MCF 10A (cell line): ENCODE measurements at regions of chr1 and their contacts with region 1.

Region 1: GRCh38 chr1:202998836-202999750 is 8.1 kb upstream of the TMEM183A start:
- DNase-seq: peak; percentile 85
- H3K4me3 Mint-ChIP-seq: no peak overlapping the region
- H3K27ac Mint-ChIP-seq: no peak overlapping the region
- H3K4me1 Mint-ChIP-seq: peaks cover 15% of the 10 kb centered on the region
- H3K27me3 Mint-ChIP-seq: peaks cover 45% of the 10 kb centered on the region
- CTCF ChIP-seq: peak; percentile 96

Region 2: GRCh38 chr1:202716654-202717053 is 282.4 kb before region 1 on chr1:
- CTCF ChIA-PET with region 1: interaction called, 22 read pairs
- POLR2A ChIA-PET with region 1: no interaction called
- intact Hi-C with region 1: loop called (anchors 1 kb)
- DNase-seq: no peak
- H3K4me3 Mint-ChIP-seq: no peak overlapping the region
- H3K27ac Mint-ChIP-seq: no peak overlapping the region
- H3K4me1 Mint-ChIP-seq: no peaks in the 10 kb centered on the region
- H3K27me3 Mint-ChIP-seq: peaks cover 40% of the 10 kb centered on the region
- CTCF ChIP-seq: no peak

Region 3: DNA sequence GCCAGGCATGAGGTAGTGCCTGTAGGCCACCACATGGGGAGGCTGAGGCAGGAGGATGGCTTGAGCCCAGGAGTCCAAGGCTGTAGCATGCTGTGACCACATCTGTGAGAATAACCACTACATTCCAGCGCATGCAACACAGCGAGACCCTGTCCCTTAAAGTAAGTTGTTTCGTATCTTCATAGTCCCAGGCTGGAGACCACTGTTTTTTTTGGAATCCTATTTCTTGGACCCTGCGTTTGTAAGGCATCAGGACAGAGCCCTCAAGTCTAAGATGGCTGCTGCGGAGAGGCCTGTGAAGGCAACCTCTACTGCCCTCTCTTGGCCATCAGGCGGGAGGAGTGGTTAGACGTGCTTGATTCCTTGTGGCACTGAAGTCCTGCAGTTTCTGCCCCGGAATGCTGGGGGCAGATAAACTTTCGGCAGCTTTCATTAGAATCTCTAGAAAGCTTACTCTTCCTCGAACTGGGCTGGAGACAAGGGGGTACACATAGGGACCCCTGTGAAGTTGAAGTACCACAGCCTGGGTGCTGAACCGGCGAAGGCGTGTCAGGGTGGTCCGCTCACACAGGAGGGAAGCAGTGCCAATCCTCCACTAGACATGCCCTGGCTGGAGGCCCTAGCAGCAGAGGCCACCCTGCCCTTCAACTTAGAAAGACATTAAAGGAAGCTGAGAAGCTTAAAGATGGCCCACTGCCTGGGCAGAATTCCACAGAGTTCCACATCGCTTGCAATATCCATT is 146.8 kb before region 1 on chr1:
- CTCF ChIA-PET with region 1: interaction called, 3 read pairs
- POLR2A ChIA-PET with region 1: no interaction called
- intact Hi-C with region 1: loop called (anchors 1 kb)
- DNase-seq: peak; percentile 88
- H3K4me3 Mint-ChIP-seq: no peak overlapping the region
- H3K27ac Mint-ChIP-seq: no peak overlapping the region
- H3K4me1 Mint-ChIP-seq: no peaks in the 10 kb centered on the region
- H3K27me3 Mint-ChIP-seq: no peaks in the 10 kb centered on the region
- CTCF ChIP-seq: peak; percentile 87

Region 4: GRCh38 chr1:202926720-202927491 is 72.2 kb before region 1 on chr1 and contains the start of gene KLHL12:
- CTCF ChIA-PET with region 1: interaction called, 30 read pairs
- POLR2A ChIA-PET with region 1: interaction called, 6 read pairs
- intact Hi-C with region 1: loop called (anchors 1 kb)
- DNase-seq: peak; percentile 99
- H3K4me3 Mint-ChIP-seq: peak within 1 kb of the TSS; percentile 95
- H3K27ac Mint-ChIP-seq: peak within 1 kb of the TSS; percentile 93
- H3K4me1 Mint-ChIP-seq: peaks cover 38% of the 10 kb centered on the region
- H3K27me3 Mint-ChIP-seq: no peaks in the 10 kb centered on the region
- CTCF ChIP-seq: peak; percentile 87
- total RNA-seq, gene KLHL12: 51.0 and 59.0 TPM in 2 replicates

Region 5: DNA sequence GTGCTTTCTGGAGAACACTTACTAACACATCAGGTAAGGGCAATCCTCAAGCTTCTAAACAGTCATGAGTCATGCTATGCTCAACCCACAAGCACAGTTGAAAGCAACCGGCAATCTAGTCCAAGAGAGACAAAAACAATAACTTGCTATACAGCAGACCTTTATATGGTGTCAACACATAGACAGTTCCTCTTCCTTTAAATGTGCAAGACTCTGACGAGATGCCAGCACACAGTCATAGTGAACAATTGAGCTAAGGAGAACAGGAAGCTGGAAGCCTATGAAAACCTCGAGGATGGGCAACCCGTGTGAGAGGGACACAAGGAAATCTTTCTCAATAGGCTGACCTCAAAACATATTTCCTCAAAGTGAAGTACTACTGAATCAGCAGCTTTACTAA is 46.3 kb before region 1 on chr1:
- CTCF ChIA-PET with region 1: interaction called, 54 read pairs
- POLR2A ChIA-PET with region 1: interaction called, 13 read pairs
- intact Hi-C with region 1: no loop called
- DNase-seq: peak; percentile 93
- H3K4me3 Mint-ChIP-seq: peak overlapping the region; percentile 48
- H3K27ac Mint-ChIP-seq: peak overlapping the region; percentile 65
- H3K4me1 Mint-ChIP-seq: peaks cover 55% of the 10 kb centered on the region
- H3K27me3 Mint-ChIP-seq: no peaks in the 10 kb centered on the region
- CTCF ChIP-seq: no peak

Region 6: DNA sequence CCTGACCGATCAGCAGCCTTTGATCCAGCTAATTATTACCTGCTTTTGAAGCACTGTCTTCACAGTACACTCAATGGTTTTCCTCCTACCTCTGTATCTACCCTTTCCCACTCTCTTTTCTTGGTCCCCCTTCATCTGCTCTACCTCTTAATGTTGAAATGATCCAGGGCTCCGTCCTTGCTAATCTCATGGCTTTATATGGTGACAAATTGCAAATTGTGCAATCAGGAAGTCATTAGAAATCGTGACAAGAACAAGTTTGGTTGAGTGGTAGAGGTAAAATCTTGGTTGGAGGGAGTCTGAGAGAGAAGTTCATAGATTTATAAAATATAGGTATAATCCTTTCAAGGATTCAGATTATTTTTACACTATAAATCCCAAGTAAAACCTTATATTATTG is 22.5 kb before region 1 on chr1:
- CTCF ChIA-PET with region 1: interaction called, 16 read pairs
- POLR2A ChIA-PET with region 1: interaction called, 6 read pairs
- intact Hi-C with region 1: no loop called
- DNase-seq: no peak
- H3K4me3 Mint-ChIP-seq: no peak overlapping the region
- H3K27ac Mint-ChIP-seq: no peak overlapping the region
- H3K4me1 Mint-ChIP-seq: peaks cover 5% of the 10 kb centered on the region
- H3K27me3 Mint-ChIP-seq: peaks cover 48% of the 10 kb centered on the region
- CTCF ChIP-seq: no peak

Region 7: GRCh38 chr1:203017692-203018091 is 18.6 kb after region 1 on chr1:
- CTCF ChIA-PET with region 1: interaction called, 13 read pairs
- POLR2A ChIA-PET with region 1: interaction called, 3 read pairs
- intact Hi-C with region 1: no loop called
- DNase-seq: no peak
- H3K4me3 Mint-ChIP-seq: no peak overlapping the region
- H3K27ac Mint-ChIP-seq: no peak overlapping the region
- H3K4me1 Mint-ChIP-seq: no peaks in the 10 kb centered on the region
- H3K27me3 Mint-ChIP-seq: no peaks in the 10 kb centered on the region
- CTCF ChIP-seq: no peak

Region 8: DNA sequence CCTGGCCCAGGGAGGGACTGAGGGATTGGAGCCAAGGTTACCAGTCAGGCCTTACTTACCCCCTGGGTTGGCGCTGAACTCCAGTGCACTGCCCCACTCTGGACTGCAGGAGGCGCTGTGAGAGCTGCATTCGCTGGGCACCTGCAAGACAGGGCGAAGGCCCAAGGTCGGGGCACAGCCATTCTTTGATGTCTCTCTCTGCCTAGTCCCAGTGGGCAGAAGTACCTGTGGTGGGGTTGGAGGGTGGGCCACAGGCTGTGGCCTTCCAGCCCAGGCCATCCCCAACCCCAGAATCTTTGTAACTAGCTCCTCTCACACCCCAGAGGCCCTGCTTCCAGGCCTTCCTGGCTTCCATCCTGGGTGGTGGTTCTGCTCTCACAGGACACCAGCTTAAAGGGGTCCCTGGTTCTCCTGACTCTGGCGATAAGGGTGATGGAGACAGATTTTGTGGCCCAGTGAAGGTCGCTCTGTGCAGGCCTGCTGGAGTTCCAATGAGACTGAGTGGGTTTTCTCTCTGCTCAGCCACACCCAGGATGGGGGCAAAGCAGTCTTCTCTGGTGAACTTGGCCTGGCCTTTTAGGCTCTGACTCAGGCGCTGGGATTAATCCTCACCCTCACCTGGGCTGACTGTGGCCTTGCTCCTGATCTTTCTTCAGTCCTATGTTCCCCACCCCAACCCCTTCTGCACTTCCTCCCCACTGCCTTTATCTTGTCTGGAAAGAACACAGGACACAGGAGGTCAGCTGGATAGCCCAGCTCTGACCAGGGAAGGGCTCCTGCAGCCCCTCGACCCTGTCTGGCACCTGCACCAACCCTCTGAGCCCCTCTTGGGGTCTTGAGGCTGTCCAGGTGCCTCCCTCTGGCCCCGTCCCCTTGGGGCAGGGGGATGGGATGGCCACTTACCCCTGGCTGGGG is 85.8 kb after region 1 on chr1:
- CTCF ChIA-PET with region 1: no interaction called
- POLR2A ChIA-PET with region 1: no interaction called
- intact Hi-C with region 1: no loop called
- DNase-seq: peak; percentile 41
- H3K4me3 Mint-ChIP-seq: no peak overlapping the region
- H3K27ac Mint-ChIP-seq: no peak overlapping the region
- H3K4me1 Mint-ChIP-seq: no peaks in the 10 kb centered on the region
- H3K27me3 Mint-ChIP-seq: peaks cover 21% of the 10 kb centered on the region
- CTCF ChIP-seq: peak; percentile 86